ENCODE measurements at regions of chr9 and their contacts with region 1.

Region 1: GRCh38 chr9:6827439-6827838 is 69.7 kb downstream of the KDM4C start:
- DNase-seq: peak in 1 of 2 experiments; percentile 66
- H3K4me3 ChIP-seq: no peak overlapping the region
- H3K4me3 Mint-ChIP-seq: no peak overlapping the region
- H3K27ac Mint-ChIP-seq: peak overlapping the region; percentile 66
- H3K4me1 ChIP-seq: peaks cover 15% of the 10 kb centered on the region
- H3K4me1 Mint-ChIP-seq: peaks cover 14% of the 10 kb centered on the region
- H3K27me3 ChIP-seq: no peaks in the 10 kb centered on the region
- H3K27me3 Mint-ChIP-seq: no peaks in the 10 kb centered on the region
- CTCF ChIP-seq: peak; percentile 47 to 51

Region 2: GRCh38 chr9:6845880-6846279 is 18.4 kb after region 1 on chr9:
- CTCF ChIA-PET with region 1: interaction called, 9 read pairs
- POLR2A ChIA-PET with region 1: no interaction called
- intact Hi-C with region 1: loop called (anchors 1 kb)
- DNase-seq: peak; percentile 66 to 75
- H3K4me3 ChIP-seq: no peak overlapping the region
- H3K4me3 Mint-ChIP-seq: no peak overlapping the region
- H3K27ac Mint-ChIP-seq: peak overlapping the region; percentile 74
- H3K4me1 ChIP-seq: peaks cover 13% of the 10 kb centered on the region; the same call in 1 of the 2 replicates
- H3K4me1 Mint-ChIP-seq: peaks cover 14% of the 10 kb centered on the region
- H3K27me3 ChIP-seq: no peaks in the 10 kb centered on the region
- H3K27me3 Mint-ChIP-seq: no peaks in the 10 kb centered on the region
- CTCF ChIP-seq: peak; percentile 54 to 76

Region 3: DNA sequence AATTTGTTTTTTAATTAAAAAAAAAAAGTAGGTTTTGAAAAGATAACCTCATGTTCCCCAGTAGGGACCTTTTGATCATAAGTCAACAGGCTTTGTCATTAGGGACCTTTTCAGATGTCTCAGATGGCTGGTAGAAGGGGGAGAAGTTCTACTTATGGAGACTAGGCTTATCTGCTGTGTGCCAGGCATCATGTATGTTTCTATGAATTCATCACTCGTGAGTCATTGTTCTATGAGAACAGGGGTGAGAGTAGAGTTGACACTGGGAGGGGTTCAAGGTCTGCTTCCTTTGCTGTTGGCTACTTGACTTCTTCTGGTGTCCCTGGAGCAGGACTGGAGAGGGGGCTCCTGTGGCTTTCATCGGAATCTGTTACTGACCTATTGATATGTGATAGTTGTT is 69.1 kb after region 1 on chr9:
- CTCF ChIA-PET with region 1: interaction called, 4 read pairs
- POLR2A ChIA-PET with region 1: no interaction called
- intact Hi-C with region 1: loop called (anchors 2 kb)
- DNase-seq: no peak
- H3K4me3 ChIP-seq: no peak overlapping the region
- H3K4me3 Mint-ChIP-seq: no peak overlapping the region
- H3K27ac Mint-ChIP-seq: peak overlapping the region; percentile 89
- H3K4me1 ChIP-seq: peaks cover 68% of the 10 kb centered on the region
- H3K4me1 Mint-ChIP-seq: peaks cover 35% of the 10 kb centered on the region
- H3K27me3 ChIP-seq: no peaks in the 10 kb centered on the region
- H3K27me3 Mint-ChIP-seq: no peaks in the 10 kb centered on the region
- CTCF ChIP-seq: no peak

Region 4: GRCh38 chr9:6907772-6908381 is 80.4 kb after region 1 on chr9:
- CTCF ChIA-PET with region 1: interaction called, 3 read pairs
- POLR2A ChIA-PET with region 1: no interaction called
- intact Hi-C with region 1: loop called (anchors 1 kb)
- DNase-seq: peak in 1 of 2 experiments; percentile 31
- H3K4me3 ChIP-seq: no peak overlapping the region
- H3K4me3 Mint-ChIP-seq: no peak overlapping the region
- H3K27ac Mint-ChIP-seq: no peak overlapping the region
- H3K4me1 ChIP-seq: peaks cover 8% of the 10 kb centered on the region; the same call in 1 of the 2 replicates
- H3K4me1 Mint-ChIP-seq: peaks cover 6% of the 10 kb centered on the region
- H3K27me3 ChIP-seq: no peaks in the 10 kb centered on the region
- H3K27me3 Mint-ChIP-seq: no peaks in the 10 kb centered on the region
- CTCF ChIP-seq: peak; percentile 59 to 61

Region 5: GRCh38 chr9:6984941-6985578 is 157.6 kb after region 1 on chr9:
- CTCF ChIA-PET with region 1: interaction called, 3 read pairs
- POLR2A ChIA-PET with region 1: no interaction called
- intact Hi-C with region 1: loop called (anchors 10 kb)
- DNase-seq: no peak
- H3K4me3 ChIP-seq: no peak overlapping the region
- H3K4me3 Mint-ChIP-seq: no peak overlapping the region
- H3K27ac Mint-ChIP-seq: no peak overlapping the region
- H3K4me1 ChIP-seq: no peaks in the 10 kb centered on the region
- H3K4me1 Mint-ChIP-seq: no peaks in the 10 kb centered on the region
- H3K27me3 ChIP-seq: no peaks in the 10 kb centered on the region
- H3K27me3 Mint-ChIP-seq: no peaks in the 10 kb centered on the region
- CTCF ChIP-seq: no peak

Region 6: DNA sequence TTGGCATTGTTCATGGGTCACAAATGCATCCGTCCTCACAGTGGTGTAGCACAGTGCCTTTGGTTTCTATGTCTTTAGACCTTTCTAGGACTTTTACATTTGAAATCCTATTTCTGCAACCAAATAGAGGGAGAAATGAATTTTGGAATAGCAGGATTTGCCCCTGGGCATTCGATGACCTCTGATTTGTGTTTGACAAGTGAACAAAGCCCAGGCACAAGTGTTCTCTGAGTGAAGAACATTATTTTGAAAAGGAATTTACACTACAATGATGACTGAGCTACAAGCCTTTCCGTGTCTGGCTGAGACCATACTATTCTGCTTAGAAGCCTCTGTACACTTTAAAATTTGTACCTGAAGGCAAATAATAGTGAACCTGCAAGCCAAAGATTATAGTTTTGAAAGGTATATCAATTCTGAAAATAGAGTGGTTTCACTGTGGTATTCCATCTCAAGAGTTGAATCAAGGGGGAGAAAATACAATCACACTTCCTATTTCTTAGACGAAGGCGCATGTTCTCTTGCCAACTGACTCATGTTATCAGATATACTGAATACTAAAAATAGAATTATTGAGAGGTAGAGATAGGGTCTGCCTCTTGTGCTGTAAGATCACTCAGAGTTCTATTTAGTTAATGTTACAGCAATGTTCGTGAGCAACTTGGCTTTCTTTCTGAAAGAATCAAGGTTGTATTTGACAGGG is 227.9 kb after region 1 on chr9:
- CTCF ChIA-PET with region 1: interaction called, 10 read pairs
- POLR2A ChIA-PET with region 1: no interaction called
- intact Hi-C with region 1: loop called (anchors 5 kb)
- DNase-seq: no peak
- H3K4me3 ChIP-seq: no peak overlapping the region
- H3K4me3 Mint-ChIP-seq: no peak overlapping the region
- H3K27ac Mint-ChIP-seq: no peak overlapping the region
- H3K4me1 ChIP-seq: no peaks in the 10 kb centered on the region
- H3K4me1 Mint-ChIP-seq: no peaks in the 10 kb centered on the region
- H3K27me3 ChIP-seq: no peaks in the 10 kb centered on the region
- H3K27me3 Mint-ChIP-seq: no peaks in the 10 kb centered on the region
- CTCF ChIP-seq: no peak

Region 7: GRCh38 chr9:7150153-7150890 is 322.9 kb after region 1 on chr9:
- CTCF ChIA-PET with region 1: no interaction called
- POLR2A ChIA-PET with region 1: no interaction called
- intact Hi-C with region 1: no loop called
- DNase-seq: no peak
- H3K4me3 ChIP-seq: no peak overlapping the region
- H3K4me3 Mint-ChIP-seq: no peak overlapping the region
- H3K27ac Mint-ChIP-seq: no peak overlapping the region
- H3K4me1 ChIP-seq: no peaks in the 10 kb centered on the region
- H3K4me1 Mint-ChIP-seq: peaks cover 12% of the 10 kb centered on the region
- H3K27me3 ChIP-seq: no peaks in the 10 kb centered on the region
- H3K27me3 Mint-ChIP-seq: no peaks in the 10 kb centered on the region
- CTCF ChIP-seq: no peak

Region 8: GRCh38 chr9:7186175-7186574 is 358.7 kb after region 1 on chr9:
- CTCF ChIA-PET with region 1: no interaction called
- POLR2A ChIA-PET with region 1: no interaction called
- intact Hi-C with region 1: loop called (anchors 5 kb)
- DNase-seq: peak in 1 of 2 experiments; percentile 5
- H3K4me3 ChIP-seq: no peak overlapping the region
- H3K4me3 Mint-ChIP-seq: no peak overlapping the region
- H3K27ac Mint-ChIP-seq: no peak overlapping the region
- H3K4me1 ChIP-seq: no peaks in the 10 kb centered on the region; the same call in 1 of the 2 replicates
- H3K4me1 Mint-ChIP-seq: no peaks in the 10 kb centered on the region
- H3K27me3 ChIP-seq: no peaks in the 10 kb centered on the region
- H3K27me3 Mint-ChIP-seq: peaks cover 4% of the 10 kb centered on the region
- CTCF ChIP-seq: peak; percentile 21 to 40

Measured in Caco-2 (cell line).